ENCODE measurements at regions of chr19 and their contacts with region 1.

Region 1: DNA sequence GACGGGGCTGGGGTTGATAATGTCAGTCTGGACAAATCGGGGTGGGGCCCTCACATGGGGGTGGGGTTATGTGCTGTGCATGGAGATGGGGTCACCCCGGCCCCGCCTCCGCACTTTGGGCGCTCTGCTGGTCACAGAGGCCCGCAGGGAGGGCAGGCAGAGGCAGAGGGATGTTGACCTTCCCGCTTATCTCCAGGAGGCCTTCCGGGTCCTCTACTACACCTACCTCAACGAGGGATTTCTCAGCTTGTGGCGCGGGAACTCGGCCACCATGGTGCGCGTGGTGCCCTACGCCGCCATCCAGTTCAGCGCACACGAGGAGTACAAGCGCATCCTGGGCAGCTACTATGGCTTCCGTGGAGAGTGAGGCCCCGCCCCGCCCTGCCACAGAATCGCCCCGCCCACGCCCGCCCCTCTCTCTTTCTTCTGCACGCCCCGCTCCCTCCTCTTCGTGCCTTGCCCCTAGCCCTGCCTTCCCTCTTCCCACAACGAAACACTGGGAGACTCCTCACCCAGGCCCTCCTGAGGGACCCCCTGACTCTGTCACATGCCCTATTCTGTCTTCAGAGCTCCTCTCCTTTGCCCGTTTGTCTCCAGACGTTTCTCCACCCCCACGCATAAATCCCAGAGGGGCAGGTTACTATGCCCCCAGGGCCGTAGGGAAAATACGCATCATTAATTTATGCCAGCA is 32.8 kb downstream of the TMEM161A start:
- DNase-seq: peak in 1 of 2 experiments; percentile 88
- H3K4me3 ChIP-seq: peak overlapping the region; percentile 66 to 76 (median 75)
- H3K27ac ChIP-seq: peak overlapping the region; percentile 88
- H3K4me1 ChIP-seq: peaks cover 0 to 14% (median 9%) of the 10 kb centered on the region in 4 experiments; a peak in 6 of 7 replicates
- H3K27me3 ChIP-seq: no peaks in the 10 kb centered on the region
- CTCF ChIP-seq: no peak
- EP300 ChIP-seq: no peak
- POLR2A ChIP-seq: peak in 1 of 2 experiments; percentile 94; a peak in 2 of 3 replicates
- RAD21 ChIP-seq: no peak

Region 2: GRCh38 chr19:19063183-19064097 is 42.1 kb before region 1 on chr19 and contains the start of gene SLC25A42:
- CTCF ChIA-PET with region 1: interaction called, 8 read pairs
- POLR2A ChIA-PET with region 1: interaction called, 31 read pairs
- DNase-seq: peak; percentile 99 to 100
- H3K4me3 ChIP-seq: peak within 1 kb of the TSS; percentile 43 to 67 (median 55)
- H3K27ac ChIP-seq: peak within 1 kb of the TSS; percentile 43; the same call in 1 of the 2 replicates
- H3K4me1 ChIP-seq: peaks cover 0 to 7% (median 5%) of the 10 kb centered on the region in 4 experiments; a peak in 5 of 7 replicates
- H3K27me3 ChIP-seq: peaks cover 0 to 38% (median 29%) of the 10 kb centered on the region in 4 experiments; a peak in 6 of 7 replicates
- CTCF ChIP-seq: no peak
- EP300 ChIP-seq: no peak
- POLR2A ChIP-seq: peak; percentile 60 to 74
- RAD21 ChIP-seq: peak in 1 of 2 experiments; percentile 14; a peak in 1 of 4 replicates
- total RNA-seq, gene SLC25A42: 4.1 and 6.2 TPM in 2 replicates

Region 3: DNA sequence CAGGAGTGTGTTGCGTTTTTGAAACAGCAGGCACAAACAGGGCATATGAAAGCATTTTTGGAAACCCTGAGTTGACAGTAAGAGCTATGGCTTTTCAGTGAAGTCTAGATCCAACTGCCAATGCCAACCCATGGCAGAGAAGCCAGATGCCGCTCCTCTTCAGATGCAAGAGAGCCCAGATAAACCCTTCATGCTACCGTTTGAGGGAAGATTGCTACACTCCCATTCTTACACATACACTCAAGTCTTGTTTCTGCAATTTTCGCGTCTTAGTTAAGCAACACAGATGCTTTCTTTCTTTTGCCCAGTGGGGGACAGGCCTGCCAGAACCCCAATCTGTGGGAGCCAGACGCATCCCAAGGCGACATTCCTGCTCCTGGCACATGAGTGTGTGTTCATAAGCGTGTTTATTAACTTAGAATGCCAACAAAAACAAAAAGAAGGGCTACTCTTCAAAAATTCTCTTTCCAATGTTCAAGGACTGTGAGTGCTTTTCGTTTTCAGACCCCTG is 76.0 kb after region 1 on chr19:
- CTCF ChIA-PET with region 1: no interaction called
- POLR2A ChIA-PET with region 1: no interaction called
- DNase-seq: no peak
- H3K4me3 ChIP-seq: no peak overlapping the region
- H3K27ac ChIP-seq: no peak overlapping the region
- H3K4me1 ChIP-seq: peaks cover 0 to 3% (median 1%) of the 10 kb centered on the region in 4 experiments; a peak in 4 of 7 replicates
- H3K27me3 ChIP-seq: no peaks in the 10 kb centered on the region
- CTCF ChIP-seq: no peak
- EP300 ChIP-seq: no peak
- POLR2A ChIP-seq: no peak
- RAD21 ChIP-seq: no peak

Region 4: GRCh38 chr19:19192078-19192882 is 86.8 kb after region 1 on chr19 and contains the starts of genes BORCS8 and RFXANK:
- CTCF ChIA-PET with region 1: no interaction called
- POLR2A ChIA-PET with region 1: no interaction called
- DNase-seq: peak; percentile 97 to 98
- H3K4me3 ChIP-seq: peak within 1 kb of the TSS; percentile 85 to 96 (median 92)
- H3K27ac ChIP-seq: peak within 1 kb of the TSS; percentile 91
- H3K4me1 ChIP-seq: no peaks in the 10 kb centered on the region
- H3K27me3 ChIP-seq: no peaks in the 10 kb centered on the region
- CTCF ChIP-seq: peak in 1 of 3 experiments; percentile 4; a peak in 1 of 4 replicates
- EP300 ChIP-seq: peak in 1 of 2 experiments; percentile 33; a peak in 1 of 3 replicates
- POLR2A ChIP-seq: peak in 1 of 2 experiments; percentile 80; a peak in 2 of 3 replicates
- RAD21 ChIP-seq: no peak; a peak in 1 of 4 replicates
- total RNA-seq, gene BORCS8: 15.9 and 20.9 TPM in 2 replicates
- total RNA-seq, gene RFXANK: 72.9 and 77.7 TPM in 2 replicates

Measured in H1 (cell line).